ENCODE measurements at regions of chr12 and their contacts with region 1.

Region 1: GRCh38 chr12:3299929-3300832 is 190.8 kb upstream of the PRMT8 start:
- DNase-seq: peak; percentile 96
- H3K4me3 Mint-ChIP-seq: peak overlapping the region; percentile 71
- H3K27ac Mint-ChIP-seq: peak overlapping the region; percentile 98
- H3K4me1 Mint-ChIP-seq: peaks cover 34% of the 10 kb centered on the region
- H3K27me3 Mint-ChIP-seq: no peaks in the 10 kb centered on the region
- CTCF ChIP-seq: peak; percentile 98

Region 2: GRCh38 chr12:3251691-3252090 is 48.5 kb before region 1 on chr12:
- CTCF ChIA-PET with region 1: no interaction called
- POLR2A ChIA-PET with region 1: no interaction called
- intact Hi-C with region 1: no loop called
- DNase-seq: no peak
- H3K4me3 Mint-ChIP-seq: no peak overlapping the region
- H3K27ac Mint-ChIP-seq: no peak overlapping the region
- H3K4me1 Mint-ChIP-seq: no peaks in the 10 kb centered on the region
- H3K27me3 Mint-ChIP-seq: no peaks in the 10 kb centered on the region
- CTCF ChIP-seq: no peak

Region 3: DNA sequence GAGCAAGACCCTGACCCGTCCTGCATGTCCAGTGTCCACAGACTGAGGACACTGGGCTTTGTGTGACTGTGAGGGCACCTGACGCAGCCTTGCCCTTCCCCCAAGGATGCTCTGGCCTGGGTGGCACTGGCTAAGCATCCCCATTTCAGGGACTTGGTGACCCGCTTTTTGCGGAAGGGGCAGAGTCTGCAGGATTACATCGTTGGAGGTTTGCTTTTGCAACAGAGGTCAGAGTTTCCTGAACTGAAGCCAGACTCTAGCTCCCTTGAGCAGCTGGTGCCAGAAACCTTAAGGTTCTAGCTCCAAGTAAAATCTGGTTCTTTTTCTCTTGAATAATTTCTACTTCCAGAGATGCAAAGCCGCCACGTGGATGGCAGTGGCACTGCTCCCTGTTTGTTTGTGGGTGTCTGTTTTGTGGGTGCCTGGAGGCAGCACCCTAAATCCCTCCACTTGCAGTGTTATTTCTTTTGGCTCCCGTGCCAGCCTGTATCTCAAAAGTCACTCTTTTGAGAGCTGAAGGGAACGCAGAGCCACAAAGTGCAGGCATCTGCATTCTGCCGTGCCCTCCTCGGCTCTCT is 38.3 kb before region 1 on chr12:
- CTCF ChIA-PET with region 1: no interaction called
- POLR2A ChIA-PET with region 1: no interaction called
- intact Hi-C with region 1: no loop called
- DNase-seq: no peak
- H3K4me3 Mint-ChIP-seq: no peak overlapping the region
- H3K27ac Mint-ChIP-seq: no peak overlapping the region
- H3K4me1 Mint-ChIP-seq: no peaks in the 10 kb centered on the region
- H3K27me3 Mint-ChIP-seq: no peaks in the 10 kb centered on the region
- CTCF ChIP-seq: no peak

Region 4: GRCh38 chr12:3288690-3289089 is 11.5 kb before region 1 on chr12:
- CTCF ChIA-PET with region 1: interaction called, 32 read pairs
- POLR2A ChIA-PET with region 1: interaction called, 4 read pairs
- intact Hi-C with region 1: no loop called
- DNase-seq: no peak
- H3K4me3 Mint-ChIP-seq: no peak overlapping the region
- H3K27ac Mint-ChIP-seq: no peak overlapping the region
- H3K4me1 Mint-ChIP-seq: no peaks in the 10 kb centered on the region
- H3K27me3 Mint-ChIP-seq: no peaks in the 10 kb centered on the region
- CTCF ChIP-seq: no peak

Region 5: GRCh38 chr12:3496957-3497356 is 196.8 kb after region 1 on chr12:
- CTCF ChIA-PET with region 1: interaction called, 10 read pairs
- POLR2A ChIA-PET with region 1: no interaction called
- intact Hi-C with region 1: no loop called
- DNase-seq: peak; percentile 29
- H3K4me3 Mint-ChIP-seq: no peak overlapping the region
- H3K27ac Mint-ChIP-seq: no peak overlapping the region
- H3K4me1 Mint-ChIP-seq: no peaks in the 10 kb centered on the region
- H3K27me3 Mint-ChIP-seq: peaks cover 32% of the 10 kb centered on the region
- CTCF ChIP-seq: peak; percentile 29

Region 6: DNA sequence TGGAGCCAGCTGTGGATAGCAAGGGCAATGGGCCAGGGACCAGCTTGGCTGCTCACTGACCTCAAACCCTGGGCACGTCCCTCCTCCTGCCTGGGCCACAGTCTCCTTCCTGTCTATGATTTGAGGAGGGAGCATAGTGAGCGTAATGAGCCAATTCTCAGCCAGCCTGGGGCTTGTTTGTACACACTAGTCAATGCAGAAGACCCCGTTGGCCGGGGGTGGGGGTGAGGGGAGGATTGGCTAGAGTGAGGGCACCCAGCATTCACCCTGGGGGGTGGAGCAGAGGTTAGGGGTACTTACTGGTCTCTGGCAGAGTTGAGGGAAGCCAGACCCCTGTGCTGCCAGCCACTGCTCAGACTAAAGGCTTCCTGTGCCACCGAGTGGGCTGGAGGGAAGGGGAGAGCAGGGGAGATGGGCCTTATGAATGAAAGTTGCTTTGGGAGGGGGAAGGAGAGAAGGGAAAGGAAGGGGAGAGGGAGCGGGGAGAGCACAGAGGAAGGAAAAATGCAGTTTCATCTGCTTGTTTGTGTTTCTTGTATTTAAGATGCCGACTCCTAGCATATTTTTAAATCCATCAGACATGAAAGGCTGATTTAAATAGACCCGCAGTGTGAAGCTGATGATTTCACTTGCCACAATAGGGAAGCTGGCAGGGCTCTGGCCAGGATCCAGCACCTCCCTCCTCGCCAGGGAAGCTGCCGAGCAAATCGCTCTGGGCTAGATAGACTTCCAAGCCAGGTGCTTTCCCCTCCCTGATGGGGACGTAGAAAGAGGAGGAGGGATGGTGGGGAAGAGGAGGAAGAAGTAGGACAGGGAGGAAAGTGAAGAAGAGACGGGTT is 304.8 kb after region 1 on chr12:
- CTCF ChIA-PET with region 1: interaction called, 10 read pairs
- POLR2A ChIA-PET with region 1: no interaction called
- intact Hi-C with region 1: no loop called
- DNase-seq: peak; percentile 56
- H3K4me3 Mint-ChIP-seq: no peak overlapping the region
- H3K27ac Mint-ChIP-seq: peak overlapping the region; percentile 21
- H3K4me1 Mint-ChIP-seq: peaks cover 12% of the 10 kb centered on the region
- H3K27me3 Mint-ChIP-seq: peaks cover 23% of the 10 kb centered on the region
- CTCF ChIP-seq: no peak

Region 7: DNA sequence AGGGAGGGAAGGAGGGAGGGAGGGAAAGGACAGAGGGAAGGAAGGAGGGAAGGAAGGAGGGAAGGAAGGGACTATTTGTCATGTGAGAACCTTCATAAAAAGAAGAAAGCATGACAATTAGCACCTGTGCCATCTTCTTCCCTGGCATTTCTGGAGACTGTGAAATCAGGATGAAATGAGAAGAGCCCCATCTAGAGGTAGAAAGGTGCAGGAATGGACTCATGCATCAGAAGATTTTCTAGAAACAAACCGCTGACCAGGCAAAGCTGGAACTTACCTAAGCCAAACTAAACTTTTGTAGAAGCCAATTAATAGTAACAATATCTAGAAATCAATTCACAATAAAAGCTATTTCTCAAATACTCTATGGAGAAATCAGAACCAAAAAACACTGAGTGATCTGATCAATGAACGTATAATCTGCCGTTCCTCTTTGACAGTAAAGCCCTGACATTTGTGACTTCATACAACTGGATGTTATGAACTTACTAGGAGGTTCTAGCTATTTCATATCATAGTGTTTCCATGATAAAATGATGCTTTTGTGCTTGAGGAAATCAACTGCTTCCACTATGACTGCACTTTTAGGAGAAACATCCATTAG is 477.1 kb after region 1 on chr12:
- CTCF ChIA-PET with region 1: interaction called, 188 read pairs
- POLR2A ChIA-PET with region 1: interaction called, 7 read pairs
- intact Hi-C with region 1: loop called (anchors 1 kb)
- DNase-seq: peak; percentile 58
- H3K4me3 Mint-ChIP-seq: no peak overlapping the region
- H3K27ac Mint-ChIP-seq: no peak overlapping the region
- H3K4me1 Mint-ChIP-seq: no peaks in the 10 kb centered on the region
- H3K27me3 Mint-ChIP-seq: no peaks in the 10 kb centered on the region
- CTCF ChIP-seq: peak; percentile 64

Region 8: GRCh38 chr12:3872800-3873636 is 572.8 kb after region 1 on chr12 and contains the start of gene PARP11:
- CTCF ChIA-PET with region 1: no interaction called
- POLR2A ChIA-PET with region 1: no interaction called
- intact Hi-C with region 1: loop called (anchors 1 kb)
- DNase-seq: peak; percentile 95
- H3K4me3 Mint-ChIP-seq: peak within 1 kb of the TSS; percentile 97
- H3K27ac Mint-ChIP-seq: peak within 1 kb of the TSS; percentile 98
- H3K4me1 Mint-ChIP-seq: peaks cover 10% of the 10 kb centered on the region
- H3K27me3 Mint-ChIP-seq: peaks cover 9% of the 10 kb centered on the region
- CTCF ChIP-seq: no peak
- total RNA-seq, gene PARP11: 7.0 and 10.3 TPM in 2 replicates